Activated CD4-positive, alpha-beta T cell treated with anti-CD3 and anti-CD28 coated beads, Interleukin-2, amount 10 ng/mL, durations not matched to agents 24 days and 14 days (primary cell): ENCODE measurements at regions of chr3 and their contacts with region 1.

Region 1: DNA sequence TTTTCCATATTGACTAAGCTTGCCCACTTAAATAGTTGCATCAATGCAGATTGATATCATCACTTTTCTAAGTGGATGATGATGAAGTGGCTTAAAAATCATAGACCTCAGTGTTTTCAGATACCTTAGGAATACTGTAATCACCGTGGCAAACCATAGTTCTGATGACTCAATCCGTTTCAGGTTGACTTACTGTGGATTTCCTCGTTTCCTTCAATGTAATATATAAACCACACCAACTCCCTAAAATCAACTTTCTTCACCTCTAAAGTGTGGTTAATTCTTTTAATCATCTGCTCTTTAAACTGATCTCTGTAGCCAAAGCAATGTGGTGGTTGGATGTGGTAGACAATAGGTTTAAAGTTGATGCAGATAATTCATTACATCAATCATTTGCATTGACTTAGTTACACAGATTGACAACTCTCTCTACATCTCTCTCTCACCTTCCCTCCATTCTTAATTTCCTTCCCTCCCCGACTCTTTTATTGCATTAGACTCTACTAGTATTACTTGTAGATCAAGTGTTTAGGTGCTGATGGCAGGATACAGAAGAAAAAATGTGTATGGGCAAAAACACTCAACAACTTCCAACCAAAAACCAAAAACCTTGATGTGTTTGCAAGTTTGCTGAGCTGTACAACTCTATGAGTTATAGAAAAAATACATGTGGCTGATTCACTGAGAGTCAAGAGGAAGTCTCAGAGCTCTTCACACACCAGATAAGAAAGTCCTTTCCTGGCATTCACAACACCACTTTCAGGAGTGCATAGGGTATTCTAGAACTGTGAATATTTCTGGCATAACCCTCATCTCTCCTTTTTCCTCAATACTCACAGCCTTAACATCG is 243.5 kb downstream of the NFKBIZ start:
- DNase-seq: peak; percentile 71
- H3K4me3 Mint-ChIP-seq: peak overlapping the region; percentile 44
- H3K27ac Mint-ChIP-seq: peak overlapping the region; percentile 92
- H3K4me1 Mint-ChIP-seq: peaks cover 43% of the 10 kb centered on the region
- H3K27me3 Mint-ChIP-seq: peaks cover 4% of the 10 kb centered on the region

Region 2: GRCh38 chr3:101809178-101810021 is 283.4 kb before region 1 on chr3:
- intact Hi-C with region 1: loop called (anchors 2 kb)
- DNase-seq: peak; percentile 80
- H3K4me3 Mint-ChIP-seq: no peak overlapping the region
- H3K27ac Mint-ChIP-seq: peak overlapping the region; percentile 36
- H3K4me1 Mint-ChIP-seq: peaks cover 37% of the 10 kb centered on the region
- H3K27me3 Mint-ChIP-seq: no peaks in the 10 kb centered on the region

Region 3: DNA sequence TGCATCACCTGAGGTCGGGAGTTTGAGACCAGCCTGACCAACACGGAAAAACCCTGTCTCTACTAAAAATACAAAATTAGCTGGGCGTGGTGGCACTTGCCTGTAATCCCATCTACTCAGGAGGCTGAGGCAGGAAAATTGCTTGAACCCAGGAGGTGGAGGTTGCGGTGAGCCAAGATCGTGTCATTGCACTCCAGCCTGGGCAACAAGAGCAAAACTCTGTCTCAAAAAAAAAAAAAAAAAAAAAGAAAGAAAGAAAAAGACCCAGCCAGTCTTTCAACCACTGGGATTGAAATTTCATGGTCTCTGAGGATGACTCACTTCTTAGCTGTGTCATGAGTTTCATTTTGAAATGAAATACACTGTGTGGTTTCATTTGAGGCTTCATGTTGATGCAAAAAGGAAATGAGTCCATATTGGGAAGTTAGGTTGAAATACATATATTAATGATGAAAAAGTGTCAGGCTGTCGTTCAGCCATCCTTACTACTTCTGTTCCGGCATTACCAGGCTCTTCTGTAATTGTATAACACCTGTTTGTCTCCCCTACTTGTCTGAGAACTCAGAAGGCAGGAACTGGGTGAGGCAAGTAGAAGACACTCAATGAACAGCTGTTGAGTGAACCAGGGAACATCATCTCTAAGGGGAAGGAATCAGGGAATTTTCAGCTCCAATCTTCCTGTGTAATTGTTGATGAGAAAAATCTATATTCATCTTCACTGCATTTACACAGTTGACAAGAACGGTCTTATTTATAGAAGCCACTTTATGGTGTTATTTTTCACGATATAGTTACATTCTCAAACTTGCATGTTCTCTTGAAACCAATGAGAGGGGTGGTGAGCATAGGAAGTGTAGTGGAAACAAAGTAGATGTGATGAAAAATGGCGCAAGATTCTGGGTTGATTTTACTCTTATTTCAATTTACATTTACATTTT is 156.2 kb before region 1 on chr3:
- intact Hi-C with region 1: loop called (anchors 1 kb)
- DNase-seq: peak; percentile 79
- H3K4me3 Mint-ChIP-seq: peak overlapping the region; percentile 55
- H3K27ac Mint-ChIP-seq: peak overlapping the region; percentile 73
- H3K4me1 Mint-ChIP-seq: peaks cover 27% of the 10 kb centered on the region
- H3K27me3 Mint-ChIP-seq: peaks cover 15% of the 10 kb centered on the region

Region 4: GRCh38 chr3:102038477-102039142 is 54.2 kb before region 1 on chr3:
- intact Hi-C with region 1: no loop called
- DNase-seq: no peak
- H3K4me3 Mint-ChIP-seq: no peak overlapping the region
- H3K27ac Mint-ChIP-seq: no peak overlapping the region
- H3K4me1 Mint-ChIP-seq: peaks cover 5% of the 10 kb centered on the region
- H3K27me3 Mint-ChIP-seq: peaks cover 7% of the 10 kb centered on the region

Region 5: DNA sequence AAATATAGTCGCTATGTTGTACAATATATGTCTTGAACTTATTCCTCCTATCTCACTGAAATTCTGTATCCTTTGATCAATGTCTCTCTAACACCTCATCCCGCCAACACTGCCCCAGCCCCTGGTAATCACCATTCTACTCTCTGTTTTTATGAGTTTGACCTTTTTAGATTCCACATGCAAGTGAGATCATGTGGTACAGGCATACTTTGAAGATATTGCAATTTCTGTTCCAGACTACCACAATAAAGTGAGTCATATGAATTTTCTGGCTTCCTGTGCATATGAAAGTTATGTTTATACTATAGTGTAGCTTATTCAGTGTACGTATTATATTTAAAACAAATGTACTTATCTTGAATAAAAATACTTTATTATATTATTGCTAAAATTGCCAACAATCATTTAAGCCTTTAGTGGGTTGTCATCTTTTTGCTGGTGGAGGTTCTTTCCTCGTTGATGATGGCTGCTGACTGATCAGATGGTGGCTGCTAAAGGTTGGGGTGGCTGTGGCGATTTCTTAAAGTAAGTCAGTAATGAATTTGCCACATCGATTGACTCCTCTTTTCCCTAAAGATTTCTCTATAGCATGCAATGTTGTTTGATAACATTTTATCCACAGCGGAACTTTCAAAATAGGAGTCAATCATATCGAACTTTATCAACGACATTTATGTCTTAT is 13.7 kb after region 1 on chr3:
- intact Hi-C with region 1: loop called (anchors 2 kb)
- DNase-seq: no peak
- H3K4me3 Mint-ChIP-seq: peak overlapping the region; percentile 2
- H3K27ac Mint-ChIP-seq: peak overlapping the region; percentile 25
- H3K4me1 Mint-ChIP-seq: peaks cover 19% of the 10 kb centered on the region
- H3K27me3 Mint-ChIP-seq: peaks cover 2% of the 10 kb centered on the region

Region 6: GRCh38 chr3:102163036-102163827 is 70.4 kb after region 1 on chr3:
- intact Hi-C with region 1: loop called (anchors 2 kb)
- DNase-seq: no peak
- H3K4me3 Mint-ChIP-seq: no peak overlapping the region
- H3K27ac Mint-ChIP-seq: peak overlapping the region; percentile 0
- H3K4me1 Mint-ChIP-seq: peaks cover 14% of the 10 kb centered on the region
- H3K27me3 Mint-ChIP-seq: no peaks in the 10 kb centered on the region

Region 7: GRCh38 chr3:102180291-102181039 is 87.6 kb after region 1 on chr3:
- intact Hi-C with region 1: no loop called
- DNase-seq: no peak
- H3K4me3 Mint-ChIP-seq: no peak overlapping the region
- H3K27ac Mint-ChIP-seq: no peak overlapping the region
- H3K4me1 Mint-ChIP-seq: peaks cover 5% of the 10 kb centered on the region
- H3K27me3 Mint-ChIP-seq: no peaks in the 10 kb centered on the region